Tibial artery (tissue), 4 donors: ENCODE measurements at regions of chr2 and their contacts with region 1.

Region 1: DNA sequence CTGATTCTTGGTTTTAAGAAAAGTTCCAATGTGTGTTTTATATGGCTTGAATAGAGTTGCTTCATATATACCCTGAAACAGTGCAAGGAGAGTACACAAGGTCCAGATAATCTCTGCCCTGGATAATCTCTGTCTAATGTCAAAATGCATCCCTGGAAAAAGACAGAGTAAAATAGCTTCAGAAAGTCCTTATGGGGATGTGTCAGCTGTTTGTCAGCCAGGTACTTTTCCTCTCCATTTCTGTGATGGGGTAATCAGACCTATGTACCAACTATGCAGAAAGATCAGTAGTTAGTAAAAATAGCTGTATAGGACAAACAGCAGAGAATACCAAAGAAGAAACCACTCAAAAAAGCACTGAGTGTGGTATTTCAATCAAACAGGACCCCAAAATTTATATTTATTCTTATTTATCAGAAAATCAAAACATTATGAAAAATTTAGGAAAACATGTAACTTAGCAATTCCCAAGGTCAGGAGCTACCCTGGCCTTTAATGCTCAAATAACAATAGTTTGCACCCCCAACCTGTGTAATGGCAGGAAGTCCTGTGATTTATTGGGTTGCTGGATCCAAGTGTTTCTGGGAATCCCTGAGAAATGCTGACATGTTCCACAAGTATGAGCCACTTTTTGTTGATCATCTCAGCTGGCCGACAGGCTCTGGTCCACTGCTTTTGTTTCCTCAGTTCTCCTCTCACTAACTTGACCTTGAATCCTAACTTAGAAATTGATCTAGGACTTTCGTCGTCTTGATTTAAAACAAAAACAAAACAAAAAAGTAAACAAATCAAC is 69.6 kb downstream of the MDH1 start:
- DNase-seq: no peak
- H3K4me3 ChIP-seq: no peak overlapping the region
- H3K27ac ChIP-seq: no peak overlapping the region
- H3K4me1 ChIP-seq: no peaks in the 10 kb centered on the region
- H3K27me3 ChIP-seq: no peaks in the 10 kb centered on the region
- CTCF ChIP-seq: no peak

Region 2: DNA sequence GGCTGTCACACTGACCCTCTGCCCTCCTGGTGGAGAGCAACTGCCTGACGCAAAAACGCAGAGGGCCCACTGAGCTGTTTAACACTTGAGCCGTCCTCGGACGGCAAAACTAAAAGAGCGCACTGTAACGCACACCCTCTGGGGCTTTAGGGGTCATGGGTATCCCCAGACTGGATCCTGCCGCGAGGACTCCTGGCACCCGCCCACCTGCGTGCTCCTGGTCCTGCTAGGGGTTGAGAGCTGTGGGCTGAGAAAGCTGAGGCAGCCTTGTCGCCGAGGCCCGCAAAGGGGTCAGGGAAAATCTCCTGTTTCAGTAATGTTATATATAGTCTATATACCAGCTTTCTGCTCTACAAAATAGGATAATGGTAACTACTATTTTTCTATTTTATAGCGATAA is 30.5 kb before region 1 on chr2:
- intact Hi-C with region 1: loop called (anchors 2 kb)
- DNase-seq: no peak
- H3K4me3 ChIP-seq: no peak overlapping the region
- H3K27ac ChIP-seq: no peak overlapping the region
- H3K4me1 ChIP-seq: no peaks in the 10 kb centered on the region
- H3K27me3 ChIP-seq: no peaks in the 10 kb centered on the region
- CTCF ChIP-seq: no peak